ENCODE measurements at regions of chr21 and their contacts with region 1.

Region 1: DNA sequence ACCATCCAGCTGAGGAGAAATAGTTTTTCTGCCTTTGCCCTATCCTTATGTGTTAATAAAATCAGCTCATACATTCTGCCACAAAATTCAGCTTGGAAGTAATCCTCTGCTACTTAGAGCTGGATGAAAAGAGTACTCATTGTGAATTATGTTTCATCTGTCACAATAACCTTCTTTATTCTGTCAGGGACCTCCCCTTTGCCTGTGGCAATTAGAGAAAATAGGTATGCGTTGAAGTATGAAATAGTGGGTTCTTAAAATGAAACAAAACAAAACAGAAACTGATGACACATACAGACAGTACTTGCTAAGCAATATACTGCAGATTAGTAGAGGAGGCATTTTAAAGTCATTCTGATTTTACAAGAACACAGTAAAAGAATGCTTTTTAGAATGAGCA is 578.5 kb downstream of the USP25 start:
- DNase-seq: no peak

Region 2: GRCh38 chr21:16194095-16194787 is 114.0 kb before region 1 on chr21:
- intact Hi-C with region 1: loop called (anchors 10 kb)
- DNase-seq: peak; percentile 82

Region 3: DNA sequence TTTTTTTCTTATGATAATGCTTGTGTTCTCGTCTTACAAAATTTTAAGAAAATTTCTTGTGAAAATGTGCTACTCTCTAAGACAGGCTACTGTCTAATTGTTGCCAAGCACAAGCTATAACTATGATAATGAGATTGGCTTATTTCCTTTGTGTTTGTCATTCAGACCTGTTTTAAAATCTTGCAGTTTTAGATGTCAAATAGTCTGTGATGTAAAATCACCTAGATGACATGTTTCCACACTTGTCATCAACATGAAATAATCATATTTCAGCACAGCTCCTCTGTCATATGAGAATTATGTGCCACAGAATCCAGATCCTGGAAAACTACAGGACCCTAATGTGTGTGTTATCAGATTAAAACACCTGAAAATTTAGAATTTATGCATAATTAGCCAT is 38.8 kb before region 1 on chr21:
- intact Hi-C with region 1: no loop called
- DNase-seq: no peak

Measured in cardiac septum (tissue), 1 donor.